Activated CD8-positive, alpha-beta memory T cell treated with anti-CD3 and anti-CD28 coated beads, Interleukin-2, amount 10 ng/mL, durations not matched to agents 7 days and 5 days (primary cell): ENCODE measurements at regions of chr12 and their contacts with region 1.

Region 1: GRCh38 chr12:118175823-118176447 is 40.0 kb downstream of the PEBP1 start:
- DNase-seq: no peak
- ATAC-seq: no peak
- H3K4me3 Mint-ChIP-seq: no peak overlapping the region
- H3K27ac Mint-ChIP-seq: no peak overlapping the region
- H3K4me1 Mint-ChIP-seq: no peaks in the 10 kb centered on the region
- H3K27me3 Mint-ChIP-seq: no peaks in the 10 kb centered on the region

Region 2: DNA sequence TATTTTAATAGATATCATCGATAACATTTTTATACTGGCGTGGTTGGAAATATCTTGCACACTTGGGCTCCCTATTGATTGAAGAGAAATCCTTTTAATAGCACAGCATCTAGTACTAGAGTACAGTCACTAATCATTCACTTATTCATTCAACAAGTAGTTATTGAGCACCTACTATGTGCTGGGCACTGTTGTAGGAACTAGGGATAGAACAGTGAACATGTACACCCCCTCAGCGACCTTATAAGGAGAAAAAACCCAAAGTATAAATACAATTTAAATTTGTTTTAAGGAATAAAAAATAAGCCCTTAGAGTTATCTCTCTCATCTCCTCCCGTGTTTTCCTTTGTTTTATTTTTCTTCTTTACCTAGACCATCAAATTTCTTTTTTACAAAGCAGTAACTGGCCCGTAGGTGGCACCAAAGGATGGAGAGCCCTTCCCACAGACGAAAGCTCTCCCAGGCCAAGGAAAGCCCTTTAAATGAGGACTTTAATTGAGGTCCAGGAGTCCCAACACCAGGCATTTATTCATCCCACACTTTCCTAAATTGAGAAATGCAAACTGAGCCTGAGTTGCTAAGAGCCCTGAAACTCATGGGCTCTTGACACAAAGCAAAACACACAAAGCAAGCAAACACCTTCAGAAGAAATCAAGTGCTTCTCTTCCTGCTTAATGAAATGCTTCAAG is 11.0 kb before region 1 on chr12:
- CTCF ChIA-PET with region 1: interaction called, 14 read pairs
- DNase-seq: no peak
- ATAC-seq: no peak
- H3K4me3 Mint-ChIP-seq: no peak overlapping the region
- H3K27ac Mint-ChIP-seq: no peak overlapping the region
- H3K4me1 Mint-ChIP-seq: peaks cover 14% of the 10 kb centered on the region
- H3K27me3 Mint-ChIP-seq: no peaks in the 10 kb centered on the region